ENCODE measurements at regions of chr7 and their contacts with region 1.

Region 1: GRCh38 chr7:83629117-83629880 is 19.6 kb downstream of the SEMA3E start:
- DNase-seq: peak; percentile 31

Region 2: GRCh38 chr7:83599131-83599530 is 30.2 kb before region 1 on chr7:
- intact Hi-C with region 1: loop called in 1 of 2 experiments (anchors 1 kb)
- DNase-seq: no peak

Region 3: GRCh38 chr7:83663131-83663530 is 33.8 kb after region 1 on chr7:
- intact Hi-C with region 1: no loop called
- DNase-seq: no peak

Region 4: GRCh38 chr7:83701736-83702135 is 72.4 kb after region 1 on chr7:
- intact Hi-C with region 1: loop called in 1 of 2 experiments (anchors 2 kb)
- DNase-seq: no peak

Region 5: GRCh38 chr7:84002348-84002747 is 373.0 kb after region 1 on chr7:
- intact Hi-C with region 1: no loop called
- DNase-seq: no peak

Measured in posterior vena cava (tissue), 2 donors.